AG04450 (cell line): ENCODE measurements at regions of chr5 and their contacts with region 1.

Region 1: DNA sequence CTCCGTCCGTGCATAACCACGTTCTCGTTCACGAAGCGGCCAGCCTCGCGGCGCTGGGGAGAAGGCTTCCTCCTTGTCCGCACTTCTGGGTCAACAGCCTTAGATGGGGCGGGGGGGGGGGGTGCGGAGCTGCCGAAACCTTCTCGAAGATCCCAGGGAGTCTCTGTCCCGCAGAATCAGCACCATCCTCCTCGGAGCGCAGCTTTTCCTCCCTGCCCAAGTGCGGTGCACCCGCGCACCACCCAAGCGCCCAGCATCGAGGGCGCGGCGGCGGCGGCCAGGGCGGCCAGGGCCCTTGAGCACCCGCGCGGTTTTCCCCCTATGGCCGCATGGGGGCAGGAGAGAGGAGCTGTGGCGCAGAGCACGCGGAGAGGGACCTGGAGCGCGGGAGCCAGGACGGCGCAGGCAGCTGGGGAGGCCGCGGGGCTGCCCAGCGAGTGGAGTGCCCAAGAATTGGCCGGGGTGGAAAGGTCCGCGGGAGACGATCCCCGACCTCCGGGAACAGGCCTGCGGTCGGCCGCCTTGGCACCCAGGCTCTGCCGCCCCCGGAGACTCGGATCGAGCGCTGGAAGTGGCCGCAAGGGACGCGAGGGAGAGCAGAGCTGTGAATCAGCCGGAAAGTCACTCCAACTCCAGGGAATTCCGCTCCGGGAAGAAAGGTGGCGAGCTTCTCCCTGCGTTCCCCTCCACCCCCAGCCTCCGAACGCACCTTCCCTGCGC is 43.1 kb downstream of the TMEM174 start:
- DNase-seq: peak; percentile 38
- H3K4me3 ChIP-seq: peak overlapping the region; percentile 62
- H3K27ac ChIP-seq: peak overlapping the region; percentile 59
- H3K27me3 ChIP-seq: no peaks in the 10 kb centered on the region
- CTCF ChIP-seq: peak; percentile 67

Region 2: DNA sequence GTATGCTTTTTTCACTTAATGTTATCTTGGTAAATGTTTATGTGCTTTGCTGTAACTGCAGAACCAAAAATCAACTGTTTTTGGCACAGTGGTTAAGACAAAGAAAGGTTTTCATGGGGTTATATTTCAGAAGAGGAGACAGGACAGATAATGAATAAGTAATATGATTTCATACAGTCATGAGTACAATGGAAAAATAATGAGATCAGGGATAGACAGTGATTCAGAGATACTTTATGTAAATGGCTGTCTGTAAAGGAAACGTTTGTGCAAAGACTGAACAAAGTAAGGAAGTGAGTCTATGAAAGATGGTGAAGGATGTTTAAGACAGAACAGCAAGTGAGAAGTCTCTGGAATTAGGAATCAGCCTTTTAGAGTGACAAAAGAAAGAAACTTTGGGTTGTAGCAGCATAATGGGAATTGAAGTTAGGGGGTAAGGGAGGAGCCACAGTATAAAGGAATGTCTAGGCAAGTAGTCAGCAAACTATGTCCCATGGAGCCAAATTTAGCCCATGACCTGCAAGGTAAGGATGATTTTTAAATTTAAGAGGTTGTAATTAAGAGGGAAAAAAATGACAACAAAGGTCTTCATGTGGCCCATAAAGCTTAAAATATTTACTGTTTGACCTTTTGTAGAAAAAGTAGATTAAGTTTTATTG is 344.6 kb before region 1 on chr5:
- CTCF ChIA-PET with region 1: no interaction called
- POLR2A ChIA-PET with region 1: no interaction called
- DNase-seq: no peak
- H3K4me3 ChIP-seq: no peak overlapping the region
- H3K27ac ChIP-seq: no peak overlapping the region
- H3K27me3 ChIP-seq: no peaks in the 10 kb centered on the region
- CTCF ChIP-seq: no peak

Region 3: GRCh38 chr5:73032635-73033034 is 183.4 kb before region 1 on chr5:
- CTCF ChIA-PET with region 1: interaction called, 10 read pairs
- POLR2A ChIA-PET with region 1: no interaction called
- DNase-seq: no peak
- H3K4me3 ChIP-seq: no peak overlapping the region
- H3K27ac ChIP-seq: no peak overlapping the region
- H3K27me3 ChIP-seq: no peaks in the 10 kb centered on the region
- CTCF ChIP-seq: no peak

Region 4: DNA sequence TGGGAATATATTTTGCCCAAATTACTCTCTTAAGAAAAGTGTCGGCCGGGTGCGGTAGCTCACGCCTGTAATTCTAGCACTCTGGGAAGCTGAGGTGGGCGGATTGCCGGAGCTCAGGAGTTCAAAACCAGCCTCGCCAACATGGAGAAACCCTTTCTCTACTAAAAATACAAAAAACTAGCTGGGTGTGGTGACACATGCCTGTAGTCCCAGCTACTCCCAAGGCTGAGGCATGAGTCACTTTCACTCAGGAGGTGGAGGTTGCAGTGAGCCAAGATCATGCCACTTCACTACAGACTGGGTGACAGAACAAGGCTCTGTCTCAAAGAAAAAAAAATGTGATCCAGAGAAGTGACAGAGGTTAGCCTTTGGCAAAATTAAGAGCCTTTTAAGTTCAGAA is 122.1 kb before region 1 on chr5:
- CTCF ChIA-PET with region 1: interaction called, 12 read pairs
- POLR2A ChIA-PET with region 1: no interaction called
- DNase-seq: no peak
- H3K4me3 ChIP-seq: no peak overlapping the region
- H3K27ac ChIP-seq: no peak overlapping the region
- H3K27me3 ChIP-seq: no peaks in the 10 kb centered on the region
- CTCF ChIP-seq: no peak

Region 5: GRCh38 chr5:73232266-73233017 is 16.4 kb after region 1 on chr5:
- CTCF ChIA-PET with region 1: interaction called, 41 read pairs
- POLR2A ChIA-PET with region 1: no interaction called
- DNase-seq: no peak
- H3K4me3 ChIP-seq: no peak overlapping the region
- H3K27ac ChIP-seq: peak overlapping the region; percentile 39
- H3K27me3 ChIP-seq: no peaks in the 10 kb centered on the region
- CTCF ChIP-seq: no peak

Region 6: DNA sequence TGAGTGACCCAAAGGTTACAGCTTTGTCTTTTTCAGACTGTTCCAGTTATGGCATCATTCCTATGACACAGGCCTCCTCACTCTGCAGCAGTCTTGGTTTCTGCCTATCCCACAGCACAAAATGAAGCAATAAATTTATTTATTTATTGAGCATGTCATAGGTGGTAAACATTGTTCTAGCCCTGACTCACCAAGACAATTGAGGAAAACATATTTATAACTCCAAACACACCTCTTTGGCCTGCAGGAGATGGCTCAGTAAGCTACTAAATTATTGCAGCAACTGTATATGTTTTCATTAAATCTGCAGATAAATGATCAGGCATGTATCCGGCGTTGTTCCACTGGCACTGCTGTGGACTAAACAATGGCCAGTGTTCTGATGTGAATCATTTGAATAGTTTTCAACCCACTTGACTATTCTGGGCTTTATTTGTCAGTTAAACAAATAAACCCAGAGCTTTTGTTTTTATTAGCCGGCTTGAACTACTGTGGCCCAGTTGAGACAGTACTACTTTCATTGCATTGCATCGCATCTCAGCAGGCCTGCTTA is 149.3 kb after region 1 on chr5:
- CTCF ChIA-PET with region 1: interaction called, 20 read pairs
- POLR2A ChIA-PET with region 1: no interaction called
- DNase-seq: peak; percentile 83
- H3K4me3 ChIP-seq: no peak overlapping the region
- H3K27ac ChIP-seq: peak overlapping the region; percentile 53
- H3K27me3 ChIP-seq: no peaks in the 10 kb centered on the region
- CTCF ChIP-seq: no peak

Region 7: DNA sequence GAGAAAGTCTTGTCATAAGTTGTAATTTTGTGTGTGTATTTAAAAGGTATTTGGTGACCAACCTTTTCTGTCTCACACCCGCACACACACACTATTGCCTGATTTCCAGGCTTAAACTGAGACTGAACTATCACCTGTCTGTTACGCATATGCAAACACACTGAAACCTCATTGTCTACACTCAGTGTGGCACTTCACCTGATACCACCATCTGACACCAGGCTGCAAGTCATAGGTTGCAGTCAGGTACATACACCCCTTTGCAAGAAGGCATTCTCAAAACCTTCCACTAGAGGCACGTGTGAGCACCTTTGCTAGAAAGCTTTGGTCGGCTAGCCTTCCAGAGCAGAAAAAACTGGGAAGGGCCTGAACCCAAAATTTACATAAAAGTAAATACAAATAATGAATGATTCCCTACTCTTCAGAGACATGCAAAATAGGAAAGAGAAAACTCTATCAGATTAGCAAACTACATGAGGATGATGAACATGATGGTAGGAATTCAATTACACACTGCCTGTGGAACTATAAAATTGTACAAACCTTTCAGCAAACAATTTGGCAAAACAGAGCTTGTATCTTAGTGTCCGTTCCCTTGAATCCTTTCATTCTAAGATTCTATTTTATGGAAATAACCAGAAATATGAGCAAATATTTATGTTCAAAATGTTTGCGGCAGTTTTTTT is 238.4 kb after region 1 on chr5:
- CTCF ChIA-PET with region 1: interaction called, 61 read pairs
- POLR2A ChIA-PET with region 1: interaction called, 12 read pairs
- DNase-seq: no peak
- H3K4me3 ChIP-seq: no peak overlapping the region
- H3K27ac ChIP-seq: no peak overlapping the region
- H3K27me3 ChIP-seq: no peaks in the 10 kb centered on the region
- CTCF ChIP-seq: peak; percentile 91